ENCODE measurements at regions of chr5 and their contacts with region 1.

Region 1: GRCh38 chr5:31825518-31826068 is 186.7 kb downstream of the PDZD2 start:
- DNase-seq: peak in 11 of 14 experiments; percentile 10 to 66 (median 32)
- ATAC-seq: peak; percentile 87
- H3K4me3 ChIP-seq: no peak overlapping the region
- H3K4me3 Mint-ChIP-seq: peak overlapping the region; percentile 56
- H3K27ac ChIP-seq: no peak overlapping the region
- H3K27ac Mint-ChIP-seq: no peak overlapping the region
- H3K4me1 ChIP-seq: no peaks in the 10 kb centered on the region
- H3K4me1 Mint-ChIP-seq: peaks cover 10% of the 10 kb centered on the region
- H3K27me3 ChIP-seq: peaks cover 0 to 2% of the 10 kb centered on the region in 2 experiments
- H3K27me3 Mint-ChIP-seq: peaks cover 8% of the 10 kb centered on the region
- CTCF ChIP-seq: peak; percentile 62

Region 2: DNA sequence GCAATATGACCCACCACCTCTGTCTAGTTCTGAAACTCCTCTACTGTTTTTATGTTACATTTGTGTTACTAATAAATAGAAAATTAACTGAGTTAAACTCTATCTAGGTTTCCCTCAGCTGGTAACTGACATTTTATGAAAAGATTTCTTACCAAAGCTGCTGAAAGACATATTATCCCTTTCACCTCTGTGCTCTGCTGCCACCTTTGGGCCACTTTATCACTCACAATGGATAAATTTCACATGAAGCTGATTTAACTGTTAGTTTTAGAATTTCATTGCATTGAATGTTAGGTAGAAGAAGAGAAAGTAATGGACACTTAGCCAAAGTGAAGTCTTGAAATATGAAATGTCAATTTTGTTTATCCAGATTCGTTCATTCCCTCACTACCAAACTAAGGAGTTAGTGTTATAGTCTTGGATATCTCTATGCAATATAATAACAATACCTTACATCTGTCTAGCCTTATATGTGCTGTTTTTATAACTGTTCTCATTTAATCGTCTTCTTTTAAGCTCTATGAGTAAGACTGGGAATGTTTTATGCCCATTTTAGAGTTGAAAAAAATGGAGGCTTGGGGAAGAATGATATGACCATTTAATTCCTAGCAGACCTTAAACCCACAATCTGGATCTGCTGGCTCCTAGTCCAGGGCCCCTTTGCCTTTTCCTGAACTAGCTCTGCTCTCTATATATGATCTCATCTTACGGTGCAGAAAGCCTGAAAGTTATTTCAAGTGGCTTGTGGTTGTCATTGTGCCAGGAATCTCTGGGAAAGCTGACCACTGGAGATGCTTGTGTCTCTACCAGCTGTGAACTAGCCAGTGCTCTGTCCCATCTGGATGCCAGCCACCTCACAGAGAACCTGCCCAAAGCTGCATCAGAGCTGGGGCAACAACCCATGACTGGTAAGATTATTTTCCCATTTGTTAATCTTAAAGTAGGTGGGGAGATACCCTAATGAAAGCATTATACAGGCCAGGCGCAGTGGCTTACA is 251.4 kb after region 1 on chr5:
- CTCF ChIA-PET with region 1: interaction called, 5 read pairs
- POLR2A ChIA-PET with region 1: no interaction called
- intact Hi-C with region 1: loop called (anchors 1 kb)
- DNase-seq: peak in 12 of 14 experiments; percentile 9 to 61 (median 30)
- ATAC-seq: peak; percentile 56
- H3K4me3 ChIP-seq: no peak overlapping the region
- H3K4me3 Mint-ChIP-seq: no peak overlapping the region
- H3K27ac ChIP-seq: no peak overlapping the region
- H3K27ac Mint-ChIP-seq: no peak overlapping the region
- H3K4me1 ChIP-seq: no peaks in the 10 kb centered on the region
- H3K4me1 Mint-ChIP-seq: no peaks in the 10 kb centered on the region
- H3K27me3 ChIP-seq: no peaks in the 10 kb centered on the region
- H3K27me3 Mint-ChIP-seq: no peaks in the 10 kb centered on the region
- CTCF ChIP-seq: peak; percentile 78

Region 3: GRCh38 chr5:32092938-32093812 is 267.6 kb after region 1 on chr5:
- CTCF ChIA-PET with region 1: interaction called, 3 read pairs
- POLR2A ChIA-PET with region 1: interaction called, 4 read pairs
- intact Hi-C with region 1: loop called (anchors 2 to 5 kb)
- DNase-seq: peak; percentile 29 to 79 (median 54)
- ATAC-seq: peak; percentile 93
- H3K4me3 ChIP-seq: no peak overlapping the region
- H3K4me3 Mint-ChIP-seq: no peak overlapping the region
- H3K27ac ChIP-seq: no peak overlapping the region
- H3K27ac Mint-ChIP-seq: no peak overlapping the region
- H3K4me1 ChIP-seq: peaks cover 6% of the 10 kb centered on the region
- H3K4me1 Mint-ChIP-seq: peaks cover 7% of the 10 kb centered on the region
- H3K27me3 ChIP-seq: no peaks in the 10 kb centered on the region
- H3K27me3 Mint-ChIP-seq: no peaks in the 10 kb centered on the region
- CTCF ChIP-seq: peak; percentile 77

Measured in CD4-positive, alpha-beta T cell (primary cell).